Left colon (tissue), 2 donors: ENCODE measurements at regions of chr22 and their contacts with region 1.

Region 1: DNA sequence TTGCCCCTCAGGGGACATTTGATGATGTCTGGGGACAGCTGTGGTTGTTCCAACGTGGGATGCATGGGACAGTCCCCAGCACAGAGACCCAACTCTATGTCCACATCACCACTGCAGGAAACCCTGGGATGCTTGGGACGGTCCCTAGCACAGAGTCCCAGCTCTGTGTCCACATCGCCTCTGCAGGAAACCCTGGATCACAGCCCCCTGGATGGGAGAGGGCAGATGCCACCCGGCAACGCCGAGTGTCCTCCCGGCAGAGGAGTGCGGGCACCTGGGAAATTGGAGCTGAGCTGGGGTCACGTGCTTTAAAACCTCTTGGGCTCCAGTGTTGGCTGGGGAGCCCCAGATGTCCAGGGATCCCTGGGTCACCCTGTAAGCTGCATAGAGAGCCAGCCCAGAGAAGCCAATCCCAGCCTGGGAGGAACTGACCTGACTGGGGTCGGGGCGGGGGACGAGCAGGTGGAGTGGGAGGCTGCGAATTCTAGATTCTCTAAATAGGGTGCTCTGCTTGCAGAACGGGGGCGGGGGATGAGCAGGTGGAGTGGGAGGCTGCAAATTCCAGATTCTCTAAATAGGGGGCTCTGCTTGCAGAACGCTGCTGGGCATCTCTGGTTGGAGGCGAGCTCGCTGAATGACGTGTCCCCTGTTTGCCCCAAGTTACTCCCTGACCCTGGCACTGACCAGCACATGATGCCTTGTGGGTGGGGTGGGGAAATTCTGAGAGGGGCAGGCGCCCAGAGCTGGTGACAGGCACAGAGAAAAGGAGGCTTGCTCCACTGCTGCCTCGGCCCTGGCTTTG is 1197.8 kb downstream of the BRD1 start:
- DNase-seq: no peak
- ATAC-seq: no peak

Region 2: DNA sequence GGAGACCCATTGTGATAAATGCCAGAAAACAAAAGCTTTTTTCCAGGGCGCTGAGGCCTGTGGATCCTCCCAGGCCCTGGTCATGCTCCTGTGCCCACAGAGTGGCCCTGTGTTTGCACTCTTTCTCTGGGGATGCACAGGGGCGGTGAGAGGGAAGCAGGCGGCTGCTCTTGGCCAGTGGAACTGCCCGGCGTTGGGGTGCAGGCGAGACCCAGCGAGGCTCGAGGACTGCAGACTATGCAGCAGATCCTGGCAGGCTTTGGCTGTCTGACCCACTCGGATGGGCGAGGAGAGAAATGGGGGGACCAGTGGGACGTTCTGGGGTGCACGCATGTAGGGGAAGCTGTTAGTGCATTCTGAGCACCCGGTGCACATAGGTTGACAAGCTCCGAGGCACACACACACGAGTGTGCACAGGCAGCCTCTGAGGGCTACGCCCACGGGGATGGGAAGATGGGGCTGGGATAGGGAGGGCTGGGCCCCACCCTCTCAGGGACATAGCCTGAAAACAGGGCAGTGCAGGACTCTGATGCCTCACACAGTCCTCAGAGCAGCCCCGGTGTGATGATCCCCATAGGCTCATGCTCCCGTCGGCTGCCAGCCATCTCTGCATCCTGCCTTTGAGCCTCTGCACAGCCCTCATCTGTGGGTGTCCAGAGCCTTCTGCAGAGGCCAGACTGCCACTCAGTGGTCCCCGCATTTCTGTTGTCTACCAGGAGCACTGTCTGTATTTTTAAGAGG is 35.6 kb before region 1 on chr22:
- intact Hi-C with region 1: loop called in 1 of 2 experiments (anchors 5 kb)
- DNase-seq: no peak
- ATAC-seq: no peak